A549 (cell line): ENCODE measurements at regions of chr17 and their contacts with region 1.

Region 1: GRCh38 chr17:45394913-45395568 is 37.6 kb downstream of the ARHGAP27 start:
- DNase-seq: peak; percentile 88 to 95
- ATAC-seq: peak; percentile 68 to 83
- H3K4me3 ChIP-seq: no peak overlapping the region
- H3K27ac ChIP-seq: peak overlapping the region; percentile 23 to 73; a peak in 3 of 6 replicates
- H3K4me1 ChIP-seq: 0 out of 3 replicates have a peak, but pooled peaks cover 3% of the 10 kb centered on the region
- CTCF ChIP-seq: peak; percentile 97
- EP300 ChIP-seq: no peak
- POLR2A ChIP-seq: no peak
- RAD21 ChIP-seq: peak; percentile 89 to 90

Region 2: DNA sequence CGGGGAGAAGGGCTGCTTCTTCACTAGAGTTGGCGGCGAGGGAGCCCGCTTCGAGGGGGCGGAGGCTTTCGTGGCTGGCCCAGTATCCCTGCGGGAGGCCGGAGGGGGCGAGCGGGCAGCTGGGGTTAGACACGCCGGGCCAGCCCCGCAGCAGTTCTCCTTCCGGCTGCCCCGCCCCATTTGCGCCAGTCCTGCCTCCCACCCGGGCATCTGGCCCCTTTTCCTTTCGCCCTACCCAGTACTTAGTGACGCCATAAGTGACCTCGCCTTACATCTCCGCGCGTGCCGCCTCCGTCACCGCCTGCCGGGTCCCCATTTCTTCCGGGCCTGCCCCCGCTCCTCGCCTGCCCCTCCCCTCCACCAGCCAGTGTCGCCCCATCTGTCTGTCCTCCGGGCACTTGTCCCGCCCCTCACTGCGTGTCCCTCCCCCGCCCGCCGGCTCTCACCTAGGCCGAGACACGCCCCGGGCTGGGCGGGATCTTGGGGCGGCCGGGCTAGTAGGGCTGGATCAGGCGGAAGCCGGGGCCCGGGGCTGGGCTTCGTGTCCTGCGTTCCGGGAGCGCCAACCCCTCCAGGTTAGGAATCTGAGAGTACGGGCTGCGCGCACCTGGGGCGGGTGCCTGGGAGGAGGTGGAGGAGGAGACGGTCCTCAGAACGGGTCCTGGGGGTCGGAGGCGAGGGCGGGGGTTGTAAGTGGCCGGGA is 147.5 kb before region 1 on chr17:
- CTCF ChIA-PET with region 1: interaction called, 128 read pairs
- POLR2A ChIA-PET with region 1: no interaction called
- DNase-seq: peak; percentile 99 to 100
- ATAC-seq: peak; percentile 79 to 91
- H3K4me3 ChIP-seq: peak overlapping the region; percentile 89
- H3K27ac ChIP-seq: peak overlapping the region; percentile 93 to 96
- H3K4me1 ChIP-seq: peaks cover 49% of the 10 kb centered on the region
- CTCF ChIP-seq: no peak
- EP300 ChIP-seq: peak; percentile 78 to 91; a peak in 3 of 5 replicates
- POLR2A ChIP-seq: peak; percentile 70
- RAD21 ChIP-seq: no peak; a peak in 1 of 5 replicates

Region 3: DNA sequence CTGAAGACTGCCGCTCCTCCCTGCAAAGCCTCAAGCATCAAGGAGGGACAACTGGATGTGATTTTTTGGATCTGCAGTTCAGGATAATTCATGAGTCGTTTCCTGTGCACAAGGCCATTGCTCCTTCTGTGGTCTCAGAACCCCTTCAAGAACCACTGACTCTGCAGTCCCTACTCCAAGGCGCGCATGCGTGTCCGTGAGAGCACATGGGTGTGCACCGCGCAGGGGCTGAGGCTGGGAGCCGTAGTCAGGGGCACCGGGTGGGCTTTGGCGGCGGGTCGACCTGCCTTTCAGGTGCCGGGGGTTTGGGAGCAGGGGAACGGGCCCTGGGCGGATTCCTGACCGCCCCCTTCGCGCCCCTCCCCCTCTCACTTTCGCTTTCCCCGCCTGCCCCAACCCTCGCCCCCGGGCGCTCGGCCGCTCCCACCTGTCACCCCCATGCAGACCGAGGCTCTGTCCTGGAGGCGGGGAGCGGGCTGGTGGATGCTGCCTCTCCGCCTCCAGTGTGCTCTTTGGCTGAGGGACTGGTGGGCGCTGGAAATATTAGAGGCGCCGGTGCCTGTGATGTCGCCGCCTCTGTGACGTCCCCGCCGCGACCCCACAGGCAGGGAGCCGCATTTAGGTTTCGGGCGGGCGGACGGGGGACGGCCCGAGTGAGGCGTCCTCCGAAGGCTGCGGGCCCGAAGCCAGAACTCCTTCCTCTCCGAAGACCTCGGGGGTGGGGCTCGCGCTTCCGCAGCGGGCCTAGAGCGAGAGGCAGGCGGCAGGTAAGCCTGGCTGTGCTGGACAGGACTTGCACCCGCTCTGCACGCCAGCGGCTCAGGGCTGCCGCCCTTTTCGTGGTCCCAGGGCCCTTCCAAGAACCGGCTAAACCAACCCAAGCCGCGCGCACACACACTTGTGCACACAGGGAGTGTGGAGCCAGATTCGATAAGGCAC is 133.2 kb before region 1 on chr17 and contains the start of gene SPATA32:
- CTCF ChIA-PET with region 1: interaction called, 1,120 read pairs
- POLR2A ChIA-PET with region 1: no interaction called
- DNase-seq: no peak
- ATAC-seq: no peak
- H3K4me3 ChIP-seq: no peak within 1 kb of the TSS
- H3K27ac ChIP-seq: peak within 1 kb of the TSS in 1 of 2 experiments; percentile 54; a peak in 3 of 6 replicates
- H3K4me1 ChIP-seq: peaks cover 46% of the 10 kb centered on the region
- CTCF ChIP-seq: no peak
- EP300 ChIP-seq: no peak
- POLR2A ChIP-seq: no peak
- RAD21 ChIP-seq: no peak
- polyA plus RNA-seq, gene SPATA32: 0.05 and 0.08 TPM in 2 replicates

Region 4: GRCh38 chr17:45410144-45411091 is 15.4 kb after region 1 on chr17:
- CTCF ChIA-PET with region 1: interaction called, 131 read pairs
- POLR2A ChIA-PET with region 1: no interaction called
- DNase-seq: no peak
- ATAC-seq: no peak
- H3K4me3 ChIP-seq: no peak overlapping the region
- H3K27ac ChIP-seq: no peak overlapping the region
- H3K4me1 ChIP-seq: peaks cover 45% of the 10 kb centered on the region
- CTCF ChIP-seq: no peak
- EP300 ChIP-seq: no peak
- POLR2A ChIP-seq: no peak
- RAD21 ChIP-seq: no peak